ENCODE measurements at regions of chr17 and their contacts with region 1.

Region 1: GRCh38 chr17:77429919-77430752 is 289.4 kb downstream of the SEC14L1 start:
- DNase-seq: peak; percentile 95
- ATAC-seq: peak; percentile 81
- H3K4me3 Mint-ChIP-seq: no peak overlapping the region
- H3K27ac Mint-ChIP-seq: no peak overlapping the region
- H3K4me1 Mint-ChIP-seq: peaks cover 76% of the 10 kb centered on the region
- H3K27me3 Mint-ChIP-seq: no peaks in the 10 kb centered on the region
- CTCF ChIP-seq: peak; percentile 67

Region 2: DNA sequence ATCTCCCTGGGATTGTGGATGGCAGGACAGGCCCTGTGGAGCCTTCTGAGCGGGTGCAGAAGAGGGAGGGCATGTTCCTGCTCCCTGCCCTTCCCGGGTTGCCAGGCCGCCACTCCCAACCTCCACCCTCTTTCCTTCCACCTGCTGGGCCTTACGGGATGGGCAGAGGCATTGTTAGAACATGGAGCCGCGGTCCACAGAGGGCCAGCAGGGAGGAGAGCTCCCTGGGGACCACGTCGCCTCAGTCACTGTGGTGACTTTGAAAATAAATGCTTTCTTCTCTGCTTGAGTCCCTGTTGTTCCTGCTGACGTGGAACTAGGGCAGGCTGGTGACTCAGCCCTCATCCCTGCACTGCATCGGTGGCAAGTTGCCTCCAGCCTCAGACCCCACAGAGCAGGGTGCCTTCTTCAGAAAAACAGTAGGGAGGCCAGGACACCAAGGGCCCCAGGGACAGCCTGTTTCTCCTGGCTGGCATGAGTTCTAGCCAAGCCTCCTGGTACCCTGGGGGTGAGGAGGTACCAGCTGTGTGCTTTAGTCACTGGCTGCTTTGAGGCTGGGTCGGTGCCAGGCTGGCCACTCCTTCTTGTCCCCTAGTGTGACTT is 64.5 kb before region 1 on chr17:
- CTCF ChIA-PET with region 1: interaction called, 10 read pairs
- POLR2A ChIA-PET with region 1: no interaction called
- DNase-seq: peak; percentile 2
- ATAC-seq: no peak
- H3K4me3 Mint-ChIP-seq: no peak overlapping the region
- H3K27ac Mint-ChIP-seq: no peak overlapping the region
- H3K4me1 Mint-ChIP-seq: peaks cover 47% of the 10 kb centered on the region
- H3K27me3 Mint-ChIP-seq: no peaks in the 10 kb centered on the region
- CTCF ChIP-seq: no peak

Region 3: GRCh38 chr17:77391668-77392375 is 38.3 kb before region 1 on chr17:
- CTCF ChIA-PET with region 1: interaction called, 57 read pairs
- POLR2A ChIA-PET with region 1: no interaction called
- DNase-seq: peak; percentile 51
- ATAC-seq: peak; percentile 64
- H3K4me3 Mint-ChIP-seq: peak overlapping the region; percentile 41
- H3K27ac Mint-ChIP-seq: peak overlapping the region; percentile 98
- H3K4me1 Mint-ChIP-seq: peaks cover 82% of the 10 kb centered on the region
- H3K27me3 Mint-ChIP-seq: no peaks in the 10 kb centered on the region
- CTCF ChIP-seq: no peak

Region 4: DNA sequence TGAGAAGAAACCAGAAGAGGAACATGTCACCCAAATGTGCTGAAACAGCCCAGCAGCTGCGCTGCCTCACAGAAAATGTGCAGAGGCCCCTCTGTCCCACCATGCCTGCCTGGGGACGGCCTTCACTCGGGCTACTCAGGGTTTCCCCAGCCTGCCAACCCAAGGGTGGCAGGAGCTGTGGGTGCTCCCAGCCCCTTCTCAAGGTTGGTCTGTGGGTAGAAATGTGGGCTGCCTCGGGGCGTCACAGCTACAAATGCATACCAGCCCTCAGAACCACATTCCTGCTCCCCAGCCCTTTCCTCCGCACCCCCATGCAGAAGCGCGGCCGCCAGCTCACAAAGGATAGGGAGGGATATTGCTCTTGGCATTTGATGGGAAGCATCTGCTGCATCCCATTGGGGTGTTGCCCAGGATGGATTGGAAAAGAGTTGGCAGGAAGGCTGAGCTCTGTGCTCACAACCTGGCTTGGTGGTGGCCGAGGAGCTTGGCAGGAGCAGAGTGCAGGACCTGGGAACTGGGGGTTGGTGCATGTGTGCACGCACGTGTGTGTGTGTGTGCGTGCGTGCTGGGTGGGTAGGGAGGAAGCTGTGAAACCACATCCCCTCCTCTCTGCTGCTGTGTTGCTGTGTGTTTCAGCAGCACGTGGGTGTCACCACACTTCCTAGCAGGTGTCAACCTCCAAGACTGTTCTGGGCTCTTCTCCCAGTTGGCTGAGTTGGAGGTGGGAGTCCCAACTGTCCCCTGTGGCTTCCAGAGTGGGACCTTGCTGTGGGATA is 15.0 kb after region 1 on chr17:
- CTCF ChIA-PET with region 1: interaction called, 81 read pairs
- POLR2A ChIA-PET with region 1: interaction called, 3 read pairs
- DNase-seq: no peak
- ATAC-seq: no peak
- H3K4me3 Mint-ChIP-seq: no peak overlapping the region
- H3K27ac Mint-ChIP-seq: peak overlapping the region; percentile 57; the same call in 1 of the 2 replicates
- H3K4me1 Mint-ChIP-seq: peaks cover 32% of the 10 kb centered on the region
- H3K27me3 Mint-ChIP-seq: no peaks in the 10 kb centered on the region
- CTCF ChIP-seq: no peak

Region 5: GRCh38 chr17:77471984-77472461 is 41.9 kb after region 1 on chr17:
- CTCF ChIA-PET with region 1: interaction called, 51 read pairs
- POLR2A ChIA-PET with region 1: interaction called, 3 read pairs
- DNase-seq: no peak
- ATAC-seq: no peak; the same call in 1 of the 2 replicates
- H3K4me3 Mint-ChIP-seq: peak overlapping the region; percentile 35
- H3K27ac Mint-ChIP-seq: peak overlapping the region; percentile 95
- H3K4me1 Mint-ChIP-seq: peaks cover 94% of the 10 kb centered on the region
- H3K27me3 Mint-ChIP-seq: no peaks in the 10 kb centered on the region
- CTCF ChIP-seq: no peak

Region 6: DNA sequence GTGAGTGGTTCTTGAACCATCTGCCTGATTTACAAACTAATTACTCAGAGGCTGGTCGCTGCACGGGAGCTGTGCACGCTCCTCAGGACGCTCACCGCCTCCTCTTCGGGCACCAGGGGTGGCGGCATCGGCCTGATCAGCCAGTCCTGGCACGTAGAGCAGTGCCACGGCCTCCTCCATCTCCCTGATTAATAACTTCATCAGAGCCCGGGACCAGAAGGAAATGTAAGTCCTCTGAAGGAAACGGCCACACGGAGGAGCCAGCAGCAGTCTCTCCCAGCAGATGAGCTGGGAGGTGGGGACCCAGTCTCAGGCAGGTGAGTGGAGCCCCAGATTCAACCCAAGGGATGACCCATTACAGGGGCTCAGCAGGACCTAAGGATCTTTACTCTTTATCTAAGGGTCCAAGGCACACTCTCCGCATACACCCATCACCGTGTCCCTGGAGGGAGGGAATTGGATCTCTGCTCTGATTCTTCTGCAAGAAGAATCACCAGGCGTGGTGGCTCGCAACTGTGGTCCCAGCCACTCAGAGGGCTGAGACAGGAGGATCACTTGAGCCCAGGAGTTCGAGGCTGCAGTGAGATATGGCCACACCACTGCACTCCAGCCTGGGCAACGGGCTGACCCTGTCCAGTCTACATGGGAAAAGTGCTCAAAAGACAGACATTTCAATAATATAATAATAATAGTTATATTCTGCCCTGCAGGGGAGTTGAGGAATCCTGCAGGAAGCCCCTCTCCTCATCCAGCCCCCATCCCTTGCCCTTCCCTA is 77.2 kb after region 1 on chr17:
- CTCF ChIA-PET with region 1: interaction called, 25 read pairs
- POLR2A ChIA-PET with region 1: no interaction called
- DNase-seq: peak; percentile 27
- ATAC-seq: peak; percentile 17; the same call in 1 of the 2 replicates
- H3K4me3 Mint-ChIP-seq: no peak overlapping the region
- H3K27ac Mint-ChIP-seq: no peak overlapping the region
- H3K4me1 Mint-ChIP-seq: peaks cover 18% of the 10 kb centered on the region
- H3K27me3 Mint-ChIP-seq: no peaks in the 10 kb centered on the region; the same call in 1 of the 2 replicates
- CTCF ChIP-seq: no peak

Region 7: GRCh38 chr17:77842528-77843147 is 412.5 kb after region 1 on chr17:
- CTCF ChIA-PET with region 1: no interaction called
- POLR2A ChIA-PET with region 1: no interaction called
- DNase-seq: peak; percentile 8
- ATAC-seq: no peak
- H3K4me3 Mint-ChIP-seq: no peak overlapping the region
- H3K27ac Mint-ChIP-seq: no peak overlapping the region
- H3K4me1 Mint-ChIP-seq: peaks cover 27% of the 10 kb centered on the region
- H3K27me3 Mint-ChIP-seq: no peaks in the 10 kb centered on the region; the same call in 1 of the 2 replicates
- CTCF ChIP-seq: no peak

Measured in WTC11 (cell line).